IMR-90 (cell line): ENCODE measurements at regions of chr11 and their contacts with region 1.

Region 1: GRCh38 chr11:71339396-71339881 is 87.1 kb upstream of the SHANK2 start:
- DNase-seq: no peak
- ATAC-seq: peak; percentile 4
- H3K4me3 ChIP-seq: no peak overlapping the region
- H3K27ac ChIP-seq: peak overlapping the region; percentile 83
- H3K4me1 ChIP-seq: peaks cover 30% of the 10 kb centered on the region
- H3K27me3 ChIP-seq: peaks cover 22% of the 10 kb centered on the region
- CTCF ChIP-seq: no peak
- POLR2A ChIP-seq: no peak
- RAD21 ChIP-seq: no peak

Region 2: GRCh38 chr11:71179898-71180605 is 159.4 kb before region 1 on chr11:
- CTCF ChIA-PET with region 1: no interaction called
- POLR2A ChIA-PET with region 1: no interaction called
- dilution Hi-C with region 1: no loop called
- in situ Hi-C with region 1: no loop called
- intact Hi-C with region 1: no loop called
- DNase-seq: no peak
- ATAC-seq: no peak
- H3K4me3 ChIP-seq: no peak overlapping the region
- H3K27ac ChIP-seq: no peak overlapping the region
- H3K4me1 ChIP-seq: no peaks in the 10 kb centered on the region
- H3K27me3 ChIP-seq: no peaks in the 10 kb centered on the region; the same call in 1 of the 2 replicates
- CTCF ChIP-seq: no peak
- POLR2A ChIP-seq: no peak
- RAD21 ChIP-seq: no peak

Region 3: DNA sequence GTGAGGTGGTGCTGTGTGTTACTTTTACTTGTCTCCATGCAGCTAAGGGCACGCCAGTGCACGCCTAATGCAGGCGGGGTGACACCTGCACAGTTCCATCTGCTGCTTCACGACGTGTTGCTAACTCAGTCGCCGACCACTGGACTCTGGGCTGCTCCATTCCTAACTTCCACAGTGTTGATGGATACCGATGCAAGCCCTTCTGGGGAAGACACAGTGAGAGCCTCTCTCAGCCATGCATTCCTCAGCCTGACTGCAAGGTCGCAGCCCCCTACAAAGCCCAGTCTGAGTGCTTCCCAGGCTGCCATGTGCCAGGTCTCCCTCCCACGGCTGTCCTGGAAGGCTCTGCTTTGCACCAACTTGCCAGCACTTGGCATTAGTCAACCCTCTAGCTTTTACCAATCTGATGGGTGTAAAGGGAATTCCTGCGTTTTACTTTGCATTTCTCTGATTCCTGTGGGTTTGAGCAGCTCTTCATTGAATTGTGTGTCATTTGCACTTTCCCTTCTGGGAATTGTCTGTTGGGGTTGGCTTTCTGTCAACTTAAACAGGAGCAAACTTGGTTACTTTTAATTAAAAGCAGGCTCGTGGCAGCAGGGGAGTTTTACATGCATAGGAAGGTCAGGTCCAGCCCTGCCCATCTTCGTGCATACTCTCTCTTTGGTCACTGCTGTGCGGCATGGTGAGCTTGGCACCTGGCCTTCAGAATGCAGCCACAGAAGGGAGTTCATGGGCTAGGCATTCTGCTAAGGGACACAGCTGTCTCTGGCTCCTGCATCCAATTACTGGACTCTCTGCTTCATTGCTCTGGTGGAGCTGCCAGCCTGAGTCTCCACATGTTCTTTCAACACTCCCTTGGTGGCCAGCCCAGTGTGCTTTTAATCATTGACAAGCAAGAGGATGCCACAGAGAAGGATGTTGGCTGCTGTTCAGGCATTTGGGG is 52.5 kb before region 1 on chr11:
- CTCF ChIA-PET with region 1: interaction called, 3 read pairs
- POLR2A ChIA-PET with region 1: no interaction called
- dilution Hi-C with region 1: no loop called
- in situ Hi-C with region 1: no loop called
- intact Hi-C with region 1: loop called (anchors 5 kb)
- DNase-seq: peak; percentile 92
- ATAC-seq: peak; percentile 91
- H3K4me3 ChIP-seq: no peak overlapping the region
- H3K27ac ChIP-seq: peak overlapping the region; percentile 63
- H3K4me1 ChIP-seq: peaks cover 5% of the 10 kb centered on the region
- H3K27me3 ChIP-seq: peaks cover 6% of the 10 kb centered on the region; the same call in 1 of the 2 replicates
- CTCF ChIP-seq: no peak
- POLR2A ChIP-seq: no peak
- RAD21 ChIP-seq: peak; percentile 1; the same call in 1 of the 2 replicates

Region 4: DNA sequence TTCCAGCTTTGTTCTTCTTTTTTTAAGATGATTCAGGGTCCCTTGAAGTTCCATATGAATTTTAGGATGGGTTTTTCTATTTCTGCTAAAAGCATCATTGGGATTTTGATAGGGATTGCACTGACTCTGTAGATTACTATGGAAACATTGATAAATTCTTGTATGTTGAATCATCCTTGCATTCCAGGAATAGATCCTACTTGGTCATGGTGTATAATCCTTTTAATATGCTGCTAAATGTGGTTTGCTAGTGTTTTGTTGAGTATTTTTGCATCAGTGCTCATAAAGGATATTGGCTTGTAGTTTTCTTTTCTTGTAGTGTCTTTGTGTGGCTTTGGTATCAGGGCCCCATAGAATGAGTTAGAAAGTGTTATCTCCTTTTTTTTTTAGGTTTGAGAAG is 939.5 kb after region 1 on chr11:
- CTCF ChIA-PET with region 1: no interaction called
- POLR2A ChIA-PET with region 1: no interaction called
- dilution Hi-C with region 1: no loop called
- in situ Hi-C with region 1: no loop called
- intact Hi-C with region 1: no loop called
- DNase-seq: peak; percentile 73
- ATAC-seq: peak; percentile 72
- H3K4me3 ChIP-seq: no peak overlapping the region
- H3K27ac ChIP-seq: no peak overlapping the region
- H3K4me1 ChIP-seq: no peaks in the 10 kb centered on the region
- H3K27me3 ChIP-seq: peaks cover 3% of the 10 kb centered on the region; the same call in 1 of the 2 replicates
- CTCF ChIP-seq: no peak
- POLR2A ChIP-seq: no peak
- RAD21 ChIP-seq: no peak